ENCODE measurements at regions of chr17 and their contacts with region 1.

Region 1: GRCh38 chr17:82320956-82321927 is 3.8 kb upstream of the CD7 start:
- DNase-seq: no peak
- ATAC-seq: peak; percentile 3; the same call in 1 of the 3 replicates
- H3K4me3 ChIP-seq: peak overlapping the region; percentile 22 to 71 (median 55); a peak in 5 of 6 replicates
- H3K27ac ChIP-seq: peak overlapping the region; percentile 63
- H3K4me1 ChIP-seq: peaks cover 90% of the 10 kb centered on the region
- H3K27me3 ChIP-seq: no peaks in the 10 kb centered on the region; a peak in 1 of 5 replicates
- CTCF ChIP-seq: peak; percentile 92
- EP300 ChIP-seq: no peak
- POLR2A ChIP-seq: no peak
- RAD21 ChIP-seq: peak; percentile 98

Region 2: GRCh38 chr17:82244413-82245140 is 76.7 kb before region 1 on chr17:
- CTCF ChIA-PET with region 1: interaction called, 13 read pairs
- POLR2A ChIA-PET with region 1: interaction called, 40 read pairs
- in situ Hi-C with region 1: loop called (anchors 5 kb)
- intact Hi-C with region 1: loop called (anchors 1 kb)
- DNase-seq: no peak
- ATAC-seq: no peak
- H3K4me3 ChIP-seq: no peak overlapping the region
- H3K27ac ChIP-seq: no peak overlapping the region
- H3K4me1 ChIP-seq: peaks cover 48% of the 10 kb centered on the region
- H3K27me3 ChIP-seq: no peaks in the 10 kb centered on the region
- CTCF ChIP-seq: peak; percentile 79
- EP300 ChIP-seq: no peak
- POLR2A ChIP-seq: no peak
- RAD21 ChIP-seq: peak; percentile 71

Region 3: DNA sequence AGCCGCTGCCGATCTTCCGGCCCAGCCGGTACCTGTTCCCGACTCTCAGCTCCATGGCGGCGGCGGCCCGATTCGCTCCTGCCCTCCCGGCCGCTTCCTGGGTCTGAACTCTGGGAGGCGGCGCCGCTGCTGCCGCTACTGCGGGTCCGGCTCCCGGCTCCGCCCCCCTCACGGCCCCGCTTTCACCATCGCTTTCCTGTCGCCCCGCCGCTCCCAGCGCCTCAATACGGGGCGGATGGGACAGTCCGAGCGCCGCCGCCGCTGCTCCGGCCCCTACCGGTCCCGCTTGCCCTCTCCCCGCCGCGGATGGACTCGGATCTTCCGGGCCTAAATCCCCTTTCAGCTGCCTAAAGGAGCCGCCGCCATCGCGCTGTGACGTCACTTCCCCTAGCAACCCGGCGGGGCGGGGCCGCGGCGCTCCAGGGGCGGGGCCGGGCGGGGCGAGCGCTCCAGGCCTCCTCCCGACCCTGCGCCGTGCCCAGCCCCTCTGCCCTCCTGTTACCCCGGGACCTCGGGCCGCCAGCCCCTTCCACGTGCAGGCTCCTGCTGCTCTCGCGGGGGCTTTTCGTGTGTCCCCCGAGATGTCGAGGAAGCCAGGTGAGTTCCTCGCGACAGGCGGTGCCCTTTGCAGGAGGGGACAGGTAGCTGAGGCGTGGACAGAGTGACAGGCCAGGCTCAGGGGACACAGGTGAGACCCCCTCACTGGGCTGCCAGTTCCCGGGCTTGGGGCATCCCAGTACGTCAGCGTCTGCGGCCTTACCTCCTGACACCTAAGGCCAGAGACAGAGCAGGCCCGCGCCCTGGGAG is 47.7 kb before region 1 on chr17 and contains the start of gene CSNK1D:
- CTCF ChIA-PET with region 1: no interaction called
- POLR2A ChIA-PET with region 1: interaction called, 12 read pairs
- in situ Hi-C with region 1: no loop called
- intact Hi-C with region 1: no loop called
- DNase-seq: peak; percentile 85
- ATAC-seq: peak; percentile 83
- H3K4me3 ChIP-seq: peak within 1 kb of the TSS; percentile 88 to 97 (median 88)
- H3K27ac ChIP-seq: peak within 1 kb of the TSS; percentile 92
- H3K4me1 ChIP-seq: peaks cover 75% of the 10 kb centered on the region
- H3K27me3 ChIP-seq: no peaks in the 10 kb centered on the region; a peak in 1 of 5 replicates
- CTCF ChIP-seq: no peak; the same call in none of the 2 replicates
- EP300 ChIP-seq: peak in 1 of 2 experiments; percentile 42; a peak in 2 of 4 replicates
- POLR2A ChIP-seq: peak; percentile 71 to 92
- RAD21 ChIP-seq: peak; percentile 77
- total RNA-seq, gene CSNK1D: 28.4 and 31.5 TPM in 2 replicates

Region 4: GRCh38 chr17:82933911-82934310 is 612.7 kb after region 1 on chr17:
- CTCF ChIA-PET with region 1: no interaction called
- POLR2A ChIA-PET with region 1: no interaction called
- in situ Hi-C with region 1: no loop called
- intact Hi-C with region 1: no loop called
- DNase-seq: no peak
- ATAC-seq: no peak
- H3K4me3 ChIP-seq: no peak overlapping the region
- H3K27ac ChIP-seq: no peak overlapping the region
- H3K4me1 ChIP-seq: no peaks in the 10 kb centered on the region
- H3K27me3 ChIP-seq: no peaks in the 10 kb centered on the region
- CTCF ChIP-seq: peak; percentile 41
- EP300 ChIP-seq: no peak
- POLR2A ChIP-seq: no peak
- RAD21 ChIP-seq: no peak